ENCODE measurements at regions of chr9 and their contacts with region 1.

Region 1: GRCh38 chr9:132412089-132412488 is 2.1 kb downstream of the CFAP77 start:
- DNase-seq: peak; percentile 10
- ATAC-seq: peak; percentile 67
- H3K4me3 ChIP-seq: no peak overlapping the region
- H3K27ac ChIP-seq: no peak overlapping the region
- H3K4me1 ChIP-seq: peaks cover 33% of the 10 kb centered on the region
- H3K27me3 ChIP-seq: peaks cover 2 to 57% of the 10 kb centered on the region in 2 experiments; a peak in 3 of 5 replicates
- CTCF ChIP-seq: peak; percentile 67
- EP300 ChIP-seq: no peak
- POLR2A ChIP-seq: no peak
- RAD21 ChIP-seq: no peak

Region 2: GRCh38 chr9:132069046-132069898 is 342.8 kb before region 1 on chr9:
- CTCF ChIA-PET with region 1: no interaction called
- POLR2A ChIA-PET with region 1: no interaction called
- in situ Hi-C with region 1: no loop called
- intact Hi-C with region 1: no loop called
- DNase-seq: no peak
- ATAC-seq: no peak
- H3K4me3 ChIP-seq: no peak overlapping the region
- H3K27ac ChIP-seq: no peak overlapping the region
- H3K4me1 ChIP-seq: 0 out of 2 replicates have a peak, but pooled peaks cover 4% of the 10 kb centered on the region
- H3K27me3 ChIP-seq: no peaks in the 10 kb centered on the region
- CTCF ChIP-seq: no peak
- EP300 ChIP-seq: no peak
- POLR2A ChIP-seq: no peak
- RAD21 ChIP-seq: no peak

Region 3: GRCh38 chr9:132575005-132575609 is 163.0 kb after region 1 on chr9:
- CTCF ChIA-PET with region 1: interaction called, 22 read pairs
- POLR2A ChIA-PET with region 1: no interaction called
- in situ Hi-C with region 1: loop called (anchors 5 kb)
- intact Hi-C with region 1: loop called (anchors 2 kb)
- DNase-seq: peak; percentile 48
- ATAC-seq: peak; percentile 93
- H3K4me3 ChIP-seq: no peak overlapping the region
- H3K27ac ChIP-seq: no peak overlapping the region
- H3K4me1 ChIP-seq: no peaks in the 10 kb centered on the region
- H3K27me3 ChIP-seq: peaks cover 7 to 30% of the 10 kb centered on the region in 2 experiments
- CTCF ChIP-seq: peak; percentile 93
- EP300 ChIP-seq: no peak
- POLR2A ChIP-seq: no peak
- RAD21 ChIP-seq: peak; percentile 92